B cell (primary cell): ENCODE measurements at regions of chr12 and their contacts with region 1.

Region 1: GRCh38 chr12:42516573-42516972 is 73.0 kb downstream of the PRICKLE1 start:
- DNase-seq: no peak
- ATAC-seq: no peak
- H3K4me3 ChIP-seq: no peak overlapping the region
- H3K4me3 Mint-ChIP-seq: no peak overlapping the region
- H3K27ac ChIP-seq: no peak overlapping the region
- H3K27ac Mint-ChIP-seq: no peak overlapping the region
- H3K4me1 ChIP-seq: no peaks in the 10 kb centered on the region
- H3K4me1 Mint-ChIP-seq: no peaks in the 10 kb centered on the region
- H3K27me3 ChIP-seq: no peaks in the 10 kb centered on the region
- H3K27me3 Mint-ChIP-seq: peaks cover 3% of the 10 kb centered on the region
- CTCF ChIP-seq: no peak

Region 2: GRCh38 chr12:42490261-42490842 is 26.2 kb before region 1 on chr12:
- CTCF ChIA-PET with region 1: no interaction called
- POLR2A ChIA-PET with region 1: interaction called, 10 read pairs
- intact Hi-C with region 1: no loop called
- DNase-seq: no peak
- ATAC-seq: no peak
- H3K4me3 ChIP-seq: no peak overlapping the region
- H3K4me3 Mint-ChIP-seq: no peak overlapping the region
- H3K27ac ChIP-seq: no peak overlapping the region
- H3K27ac Mint-ChIP-seq: no peak overlapping the region
- H3K4me1 ChIP-seq: no peaks in the 10 kb centered on the region
- H3K4me1 Mint-ChIP-seq: peaks cover 1% of the 10 kb centered on the region
- H3K27me3 ChIP-seq: no peaks in the 10 kb centered on the region
- H3K27me3 Mint-ChIP-seq: no peaks in the 10 kb centered on the region
- CTCF ChIP-seq: no peak